Left ventricle myocardium inferior (tissue), 1 donor: ENCODE measurements at regions of chr3 and their contacts with region 1.

Region 1: GRCh38 chr3:45760878-45761711 is 35.2 kb downstream of the SLC6A20 start:
- DNase-seq: no peak
- H3K4me3 ChIP-seq: no peak overlapping the region
- H3K27ac ChIP-seq: no peak overlapping the region
- H3K4me1 ChIP-seq: no peaks in the 10 kb centered on the region
- H3K27me3 ChIP-seq: peaks cover 29% of the 10 kb centered on the region
- CTCF ChIP-seq: peak; percentile 73

Region 2: GRCh38 chr3:45693941-45694521 is 67.1 kb before region 1 on chr3:
- intact Hi-C with region 1: no loop called
- DNase-seq: no peak
- H3K4me3 ChIP-seq: no peak overlapping the region
- H3K27ac ChIP-seq: peak overlapping the region; percentile 48
- H3K4me1 ChIP-seq: peaks cover 70% of the 10 kb centered on the region
- H3K27me3 ChIP-seq: no peaks in the 10 kb centered on the region
- CTCF ChIP-seq: no peak

Region 3: GRCh38 chr3:45906681-45907407 is 145.7 kb after region 1 on chr3:
- intact Hi-C with region 1: loop called (anchors 10 kb)
- DNase-seq: no peak
- H3K4me3 ChIP-seq: no peak overlapping the region
- H3K27ac ChIP-seq: no peak overlapping the region
- H3K4me1 ChIP-seq: no peaks in the 10 kb centered on the region
- H3K27me3 ChIP-seq: no peaks in the 10 kb centered on the region
- CTCF ChIP-seq: peak; percentile 34